ENCODE measurements at regions of chr7 and their contacts with region 1.

Region 1: DNA sequence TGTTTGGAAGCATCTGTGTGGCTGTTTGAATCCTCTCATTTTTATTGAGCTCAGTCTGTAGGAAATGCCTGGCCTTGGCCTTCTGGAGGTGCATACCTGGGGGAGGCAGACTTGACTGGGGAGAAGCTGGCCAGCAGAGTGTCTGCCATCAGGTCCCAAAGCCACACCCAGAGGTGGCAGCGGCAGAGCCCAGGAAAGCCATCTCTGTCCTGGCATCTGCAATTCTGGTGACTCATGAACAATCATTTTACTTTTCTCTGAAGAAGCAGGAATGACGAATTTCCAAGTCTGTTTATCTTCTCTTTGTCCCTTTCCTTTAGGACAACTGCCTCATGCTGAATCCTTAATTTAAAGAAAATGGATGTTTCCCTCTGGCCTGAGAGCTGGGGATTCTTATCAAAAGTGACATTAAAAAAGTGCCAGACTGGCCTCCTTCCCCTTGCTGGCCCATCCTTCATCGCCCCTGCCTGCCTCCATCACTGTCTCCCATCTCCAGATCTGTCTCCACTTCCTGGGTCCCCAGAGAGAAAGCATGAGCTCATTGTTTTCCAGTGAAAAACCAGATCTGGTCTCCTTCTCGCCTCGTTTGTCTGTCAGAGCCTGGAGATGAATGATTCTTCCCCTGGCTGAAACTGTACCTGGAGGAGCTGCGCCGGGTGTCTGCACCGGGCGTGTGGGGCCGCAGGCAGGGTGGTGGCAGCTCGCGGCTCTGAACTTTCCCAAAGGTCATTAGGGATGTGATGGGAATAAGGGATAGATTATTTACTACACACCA is 124.5 kb downstream of the TMEM178B start:
- DNase-seq: no peak

Region 2: DNA sequence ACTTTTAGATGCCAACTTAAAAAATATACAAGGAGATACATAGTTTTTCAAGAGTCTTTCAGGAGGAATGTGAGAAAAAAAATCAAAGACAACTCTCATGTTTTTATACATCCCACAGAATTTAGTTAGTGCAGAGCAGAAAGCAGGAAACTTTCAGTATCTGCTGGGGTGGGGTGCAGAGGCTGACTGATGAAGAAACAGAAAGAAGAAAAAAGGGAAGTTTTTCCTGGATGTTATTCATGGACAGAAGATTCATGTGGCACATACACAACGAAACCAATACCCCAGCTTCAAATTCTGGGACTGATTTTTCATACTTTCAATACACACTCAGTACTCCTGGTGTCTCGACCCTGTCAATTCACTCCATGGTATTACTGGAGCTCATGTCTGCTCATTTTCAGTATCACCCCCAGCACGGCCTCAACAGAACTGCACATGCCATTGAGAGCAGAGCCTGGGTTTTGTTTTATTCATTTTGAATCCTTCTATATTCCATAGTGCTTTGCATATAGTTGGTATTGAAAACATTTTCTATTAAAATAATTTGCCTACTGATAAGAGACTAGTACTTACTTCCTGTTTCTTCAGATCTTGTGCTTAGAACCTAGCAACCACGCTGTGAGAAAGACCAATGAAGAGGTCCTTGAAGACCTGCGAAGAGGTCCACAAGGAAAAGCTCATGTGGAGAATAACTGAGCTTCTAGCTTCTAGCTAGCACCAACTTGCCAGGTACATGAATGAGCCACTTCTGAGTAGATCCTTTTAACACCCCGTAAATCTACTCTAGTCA is 452.9 kb before region 1 on chr7:
- intact Hi-C with region 1: no loop called
- DNase-seq: no peak

Region 3: DNA sequence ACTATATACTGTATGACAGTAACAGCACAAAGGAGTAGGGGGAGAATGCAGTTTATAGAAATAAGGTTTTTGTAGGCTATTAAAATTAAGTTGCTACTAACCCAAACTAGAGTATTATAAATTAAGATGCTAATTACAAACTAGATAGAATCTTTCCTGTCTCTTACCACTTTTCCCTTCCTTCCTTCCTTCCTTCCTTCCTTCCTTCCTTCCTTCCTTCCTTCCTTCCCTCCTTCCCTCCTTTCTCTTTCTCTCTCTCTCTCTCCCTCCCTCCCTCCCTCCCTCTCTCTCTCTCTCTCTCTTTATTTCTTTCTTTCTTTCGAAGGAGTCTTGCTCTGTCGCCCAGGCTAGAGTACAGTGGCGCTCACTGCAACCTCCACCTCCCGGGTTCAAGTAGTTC is 237.3 kb before region 1 on chr7:
- intact Hi-C with region 1: no loop called
- DNase-seq: no peak

Region 4: GRCh38 chr7:141238596-141239243 is 40.3 kb after region 1 on chr7:
- intact Hi-C with region 1: no loop called
- DNase-seq: no peak

Region 5: GRCh38 chr7:141251957-141252356 is 53.6 kb after region 1 on chr7:
- intact Hi-C with region 1: loop called (anchors 10 kb)
- DNase-seq: no peak

Region 6: DNA sequence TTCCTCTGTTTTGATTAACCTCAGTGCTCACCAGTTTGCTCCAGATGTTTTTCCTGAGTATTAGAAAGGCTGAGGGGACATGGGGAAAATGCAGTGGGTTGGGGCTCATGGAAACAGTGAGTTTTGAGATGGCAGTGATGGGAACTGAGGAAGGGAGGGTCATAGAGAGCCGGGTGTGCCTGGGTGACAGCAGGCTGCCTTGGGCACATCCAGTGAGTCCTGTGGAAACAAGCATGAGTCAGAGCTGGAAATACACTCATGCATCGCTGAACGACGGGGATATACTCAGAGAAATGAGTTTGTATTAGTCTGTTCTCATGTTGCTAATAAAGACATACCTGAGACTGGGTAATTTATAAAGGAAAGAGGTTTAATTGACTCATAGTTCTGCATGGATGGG is 77.7 kb after region 1 on chr7:
- intact Hi-C with region 1: no loop called
- DNase-seq: no peak